ENCODE measurements at regions of chr16 and their contacts with region 1.

Region 1: GRCh38 chr16:84952335-84953189 is 58.8 kb downstream of the ZDHHC7 start:
- DNase-seq: peak; percentile 74
- H3K4me3 Mint-ChIP-seq: no peak overlapping the region
- H3K27ac Mint-ChIP-seq: no peak overlapping the region
- H3K4me1 Mint-ChIP-seq: peaks cover 2% of the 10 kb centered on the region
- H3K27me3 Mint-ChIP-seq: peaks cover 5% of the 10 kb centered on the region

Region 2: DNA sequence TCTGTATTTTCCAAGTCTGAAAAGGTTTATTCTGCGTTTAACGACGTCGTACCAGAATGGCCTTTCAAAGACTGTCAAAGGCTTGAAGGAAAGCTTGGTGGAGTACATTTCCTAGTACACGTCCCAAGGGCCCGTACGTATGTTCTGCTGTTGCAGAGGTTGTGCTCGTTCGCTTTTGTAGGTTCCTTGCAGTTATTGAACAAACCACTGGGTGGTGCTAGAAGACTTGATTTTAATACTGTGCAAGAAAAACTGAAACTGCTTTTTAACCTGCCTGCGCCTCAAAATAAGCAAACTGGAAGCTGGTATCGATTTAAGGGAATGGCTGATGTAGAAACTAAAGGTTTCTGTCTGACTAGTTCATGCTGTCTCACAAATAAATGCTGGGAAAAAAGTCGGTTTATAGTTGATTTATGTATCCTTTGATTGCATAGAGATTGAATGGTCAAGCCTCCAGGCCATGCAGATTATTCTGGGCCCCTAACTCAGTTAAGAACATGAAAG is 198.2 kb before region 1 on chr16:
- CTCF ChIA-PET with region 1: interaction called, 121 read pairs
- POLR2A ChIA-PET with region 1: no interaction called
- DNase-seq: peak; percentile 75
- H3K4me3 Mint-ChIP-seq: peak overlapping the region; percentile 58
- H3K27ac Mint-ChIP-seq: peak overlapping the region; percentile 53
- H3K4me1 Mint-ChIP-seq: peaks cover 83% of the 10 kb centered on the region
- H3K27me3 Mint-ChIP-seq: no peaks in the 10 kb centered on the region

Region 3: DNA sequence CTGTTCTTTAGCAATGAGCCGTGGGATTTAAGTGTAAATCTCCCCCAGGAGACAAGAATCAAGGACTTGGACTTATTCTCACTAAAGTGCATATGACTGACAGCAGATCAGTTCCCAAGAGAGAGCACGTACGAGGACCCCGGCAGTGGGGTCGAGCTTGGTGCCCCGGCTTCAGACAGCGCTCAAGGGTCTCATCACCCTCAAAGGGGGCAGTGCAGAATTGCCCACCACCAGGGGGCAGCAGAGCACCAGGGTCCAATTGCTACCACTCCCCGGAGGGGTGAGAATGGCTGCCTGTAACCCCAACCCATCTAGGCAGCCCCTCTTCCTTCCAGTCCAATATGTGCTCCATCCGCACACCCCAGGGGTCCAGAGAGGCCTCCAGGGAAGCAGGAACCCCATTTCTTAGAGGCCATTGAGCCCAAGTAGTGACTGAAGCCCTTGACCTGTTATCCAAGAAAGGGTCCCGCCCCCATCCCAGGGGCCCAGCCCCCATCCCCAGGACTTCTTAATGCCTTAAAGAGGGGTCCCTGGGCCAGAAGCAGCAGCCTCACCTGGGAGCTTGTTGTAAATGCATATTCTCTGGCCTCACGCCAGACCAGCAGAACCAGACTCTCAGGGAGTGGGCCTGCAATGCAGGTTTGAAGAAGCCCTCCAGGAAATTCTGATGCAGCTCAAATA is 27.3 kb before region 1 on chr16:
- CTCF ChIA-PET with region 1: interaction called, 14 read pairs
- POLR2A ChIA-PET with region 1: no interaction called
- DNase-seq: peak; percentile 68
- H3K4me3 Mint-ChIP-seq: no peak overlapping the region
- H3K27ac Mint-ChIP-seq: no peak overlapping the region
- H3K4me1 Mint-ChIP-seq: no peaks in the 10 kb centered on the region
- H3K27me3 Mint-ChIP-seq: peaks cover 3% of the 10 kb centered on the region

Region 4: GRCh38 chr16:84940670-84941551 is 11.7 kb before region 1 on chr16:
- CTCF ChIA-PET with region 1: no interaction called
- POLR2A ChIA-PET with region 1: no interaction called
- DNase-seq: no peak
- H3K4me3 Mint-ChIP-seq: no peak overlapping the region
- H3K27ac Mint-ChIP-seq: no peak overlapping the region
- H3K4me1 Mint-ChIP-seq: no peaks in the 10 kb centered on the region
- H3K27me3 Mint-ChIP-seq: peaks cover 3% of the 10 kb centered on the region

Region 5: GRCh38 chr16:84988322-84989080 is 35.9 kb after region 1 on chr16:
- CTCF ChIA-PET with region 1: no interaction called
- POLR2A ChIA-PET with region 1: no interaction called
- DNase-seq: no peak
- H3K4me3 Mint-ChIP-seq: no peak overlapping the region
- H3K27ac Mint-ChIP-seq: no peak overlapping the region
- H3K4me1 Mint-ChIP-seq: peaks cover 3% of the 10 kb centered on the region
- H3K27me3 Mint-ChIP-seq: no peaks in the 10 kb centered on the region

Region 6: DNA sequence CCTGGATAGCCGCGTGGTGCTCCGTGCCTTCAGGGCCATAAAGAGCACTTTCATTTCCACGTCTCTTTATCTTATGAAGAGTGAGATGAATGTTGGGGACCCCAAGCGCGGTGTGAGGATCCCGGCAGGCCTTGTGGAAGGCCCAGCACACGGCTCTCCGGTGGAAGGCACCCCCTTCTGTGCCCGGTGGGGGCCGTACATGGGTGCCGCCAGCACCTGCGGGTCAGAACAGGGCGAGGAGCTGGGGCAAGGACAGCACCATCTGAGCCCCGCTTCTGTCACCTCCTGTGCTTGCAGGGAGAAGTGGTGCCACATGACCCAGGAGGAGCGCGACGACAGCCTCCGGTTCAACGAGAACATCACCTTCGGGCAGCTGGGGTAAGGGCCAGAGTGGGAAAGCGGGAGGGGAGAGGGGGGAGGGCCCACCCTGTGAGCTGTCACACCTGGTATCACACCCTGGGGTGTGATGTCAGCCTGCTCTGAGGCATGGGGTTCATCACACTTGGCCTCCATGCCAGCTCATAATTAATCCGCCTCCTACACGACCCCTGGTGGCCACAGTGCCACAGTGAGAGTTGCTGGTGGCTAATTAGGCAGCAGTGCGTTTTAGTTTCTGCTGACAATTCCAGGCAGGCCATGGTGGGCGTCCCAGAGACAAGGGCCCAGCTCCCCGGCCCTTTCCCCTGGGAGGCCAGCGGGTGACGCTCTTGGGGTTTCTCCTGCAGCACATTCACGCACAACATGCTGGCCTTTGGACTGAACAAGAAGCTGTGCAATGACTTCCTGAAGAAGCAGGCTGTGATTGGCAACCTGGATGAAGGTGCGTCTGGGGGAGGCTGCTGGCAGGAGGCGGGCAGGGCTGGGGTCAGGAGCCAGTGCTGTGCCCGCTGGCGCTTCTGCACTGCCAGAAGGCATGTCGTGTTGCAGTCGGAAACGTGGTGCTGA is 134.1 kb after region 1 on chr16:
- CTCF ChIA-PET with region 1: no interaction called
- POLR2A ChIA-PET with region 1: no interaction called
- DNase-seq: peak; percentile 78
- H3K4me3 Mint-ChIP-seq: no peak overlapping the region
- H3K27ac Mint-ChIP-seq: no peak overlapping the region
- H3K4me1 Mint-ChIP-seq: no peaks in the 10 kb centered on the region
- H3K27me3 Mint-ChIP-seq: no peaks in the 10 kb centered on the region

Measured in activated CD4-positive, alpha-beta memory T cell treated with anti-CD3 and anti-CD28 coated beads, Interleukin-2, amount 10 ng/mL, durations not matched to agents 7 days and 5 days (primary cell).